Heart left ventricle (tissue), 16 donors: ENCODE measurements at regions of chr5 and their contacts with region 1.

Region 1: DNA sequence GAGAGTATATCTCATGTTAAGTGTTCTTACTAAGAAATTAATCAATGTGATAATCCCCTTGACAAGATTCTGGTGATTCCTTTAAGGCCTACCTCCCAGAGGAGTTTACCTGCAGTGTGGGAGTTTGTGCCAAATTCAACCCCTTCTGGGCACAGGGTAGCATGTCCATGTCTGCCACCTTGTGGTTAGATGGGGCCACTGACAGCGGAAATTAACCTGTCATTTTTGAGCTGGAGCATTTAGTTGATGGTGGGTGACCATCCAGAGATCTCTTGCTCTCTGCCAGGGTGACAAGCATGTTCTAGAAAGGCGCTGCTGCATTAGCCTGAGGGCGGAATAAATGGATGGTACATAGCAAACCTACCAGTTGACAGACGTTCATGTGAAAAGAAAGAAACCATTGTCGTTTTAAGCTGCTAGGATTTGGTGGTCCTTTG is 132.2 kb downstream of the FBXO4 start:
- DNase-seq: no peak
- ATAC-seq: peak in 2 of 4 donors; percentile 47 to 69
- H3K4me3 ChIP-seq: no peak overlapping the region
- H3K27ac ChIP-seq: no peak overlapping the region
- H3K4me1 ChIP-seq: no peaks in the 10 kb centered on the region
- H3K27me3 ChIP-seq: no peaks in the 10 kb centered on the region
- CTCF ChIP-seq: peak; percentile 43 to 71 (median 64)
- POLR2A ChIP-seq: no peak

Region 2: GRCh38 chr5:42767491-42768105 is 710.3 kb after region 1 on chr5:
- intact Hi-C with region 1: loop called in 1 of 10 experiments (anchors 5 kb)
- DNase-seq: no peak
- ATAC-seq: peak in 1 of 4 donors; percentile 52
- H3K4me3 ChIP-seq: no peak overlapping the region
- H3K27ac ChIP-seq: no peak overlapping the region
- H3K4me1 ChIP-seq: peaks cover 0 to 4% (median 0%) of the 10 kb centered on the region in 12 donors
- H3K27me3 ChIP-seq: no peaks in the 10 kb centered on the region
- CTCF ChIP-seq: peak; percentile 27 to 71 (median 58)
- POLR2A ChIP-seq: no peak